ENCODE measurements at regions of chr7 and their contacts with region 1.

Region 1: DNA sequence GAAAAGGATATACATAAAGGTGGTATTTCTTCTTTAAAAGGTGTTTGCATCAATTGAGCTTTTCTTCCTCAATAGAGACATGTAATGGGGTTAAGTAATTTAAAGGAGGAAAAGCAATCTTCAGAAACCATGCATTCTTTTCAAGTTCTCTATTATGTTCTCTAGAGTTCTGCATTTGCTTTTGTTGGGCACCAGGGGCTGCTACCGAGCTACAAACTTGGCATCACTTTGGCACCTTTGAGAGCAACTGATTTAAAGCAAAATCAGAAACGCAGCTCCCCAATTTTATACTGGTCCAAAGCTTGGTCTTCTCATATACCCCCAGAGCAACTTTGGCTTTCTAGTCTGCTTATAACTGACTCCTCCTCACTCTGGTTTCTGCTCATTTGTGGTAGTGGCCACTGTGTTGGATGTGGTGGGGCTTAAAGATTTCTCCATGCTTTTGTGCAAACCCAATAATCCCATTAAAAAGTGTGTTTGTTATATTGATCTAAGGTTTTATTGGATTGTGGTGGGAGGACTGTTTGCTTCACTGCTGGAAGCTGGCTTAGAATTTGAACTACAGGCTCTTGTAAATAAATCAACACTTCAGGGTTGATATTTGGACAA is 712.1 kb downstream of the PHTF2 start:
- DNase-seq: peak; percentile 20 to 63 (median 41)
- H3K4me3 ChIP-seq: no peak overlapping the region
- H3K27ac ChIP-seq: no peak overlapping the region
- H3K4me1 ChIP-seq: no peaks in the 10 kb centered on the region
- H3K27me3 ChIP-seq: no peaks in the 10 kb centered on the region
- CTCF ChIP-seq: peak; percentile 48 to 69 (median 55)
- POLR2A ChIP-seq: no peak

Region 2: GRCh38 chr7:77498659-77499422 is 1011.8 kb before region 1 on chr7:
- intact Hi-C with region 1: no loop called
- DNase-seq: no peak
- H3K4me3 ChIP-seq: no peak overlapping the region
- H3K27ac ChIP-seq: no peak overlapping the region
- H3K4me1 ChIP-seq: no peaks in the 10 kb centered on the region
- H3K27me3 ChIP-seq: no peaks in the 10 kb centered on the region
- CTCF ChIP-seq: no peak
- POLR2A ChIP-seq: no peak

Region 3: DNA sequence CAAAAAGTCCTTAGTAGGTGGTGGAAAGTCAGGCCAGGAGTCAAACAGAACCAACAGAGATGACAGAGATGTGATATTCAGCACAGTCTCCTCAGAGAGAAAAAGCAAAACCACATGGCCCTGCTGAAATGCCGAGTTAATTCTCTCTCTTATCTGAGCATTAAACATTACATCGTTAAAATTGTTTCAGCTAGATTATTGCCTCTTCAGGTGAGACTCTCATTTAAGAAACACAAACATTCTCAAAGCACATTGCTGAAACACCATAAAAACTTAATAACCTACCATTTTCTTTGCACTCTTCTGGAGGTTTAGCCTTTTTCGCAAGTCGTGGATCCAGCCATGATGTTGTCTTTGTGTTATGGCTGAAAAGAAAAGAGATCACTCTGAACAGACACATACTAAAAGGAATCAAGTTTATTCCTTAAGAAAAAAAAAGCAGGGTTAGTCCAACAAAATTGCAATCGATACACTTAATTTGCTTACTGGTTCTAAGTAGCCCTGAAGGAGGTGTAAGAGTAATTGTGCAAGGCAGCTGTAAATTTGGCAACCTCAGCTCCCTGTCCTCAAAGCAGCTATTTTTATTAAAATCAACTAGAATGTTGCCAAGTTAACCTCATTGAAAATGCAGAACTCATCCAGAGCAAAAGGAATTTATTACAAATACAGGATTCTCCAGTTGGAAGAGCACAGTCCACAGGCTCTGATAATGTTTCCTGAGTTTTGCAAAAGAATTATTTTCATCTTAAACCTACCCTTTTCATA is 21.0 kb before region 1 on chr7:
- intact Hi-C with region 1: no loop called
- DNase-seq: no peak
- H3K4me3 ChIP-seq: no peak overlapping the region
- H3K27ac ChIP-seq: no peak overlapping the region
- H3K4me1 ChIP-seq: peaks cover 0 to 6% of the 10 kb centered on the region in 2 donors
- H3K27me3 ChIP-seq: no peaks in the 10 kb centered on the region
- CTCF ChIP-seq: no peak
- POLR2A ChIP-seq: no peak

Region 4: GRCh38 chr7:79182283-79182682 is 671.6 kb after region 1 on chr7:
- intact Hi-C with region 1: loop called in 1 of 2 experiments (anchors 10 kb)
- DNase-seq: no peak
- H3K4me3 ChIP-seq: no peak overlapping the region
- H3K27ac ChIP-seq: no peak overlapping the region
- H3K4me1 ChIP-seq: no peaks in the 10 kb centered on the region
- H3K27me3 ChIP-seq: no peaks in the 10 kb centered on the region
- CTCF ChIP-seq: no peak
- POLR2A ChIP-seq: no peak

Measured in adrenal gland (tissue), 19 donors.